ENCODE measurements at regions of chr5 and their contacts with region 1.

Region 1: DNA sequence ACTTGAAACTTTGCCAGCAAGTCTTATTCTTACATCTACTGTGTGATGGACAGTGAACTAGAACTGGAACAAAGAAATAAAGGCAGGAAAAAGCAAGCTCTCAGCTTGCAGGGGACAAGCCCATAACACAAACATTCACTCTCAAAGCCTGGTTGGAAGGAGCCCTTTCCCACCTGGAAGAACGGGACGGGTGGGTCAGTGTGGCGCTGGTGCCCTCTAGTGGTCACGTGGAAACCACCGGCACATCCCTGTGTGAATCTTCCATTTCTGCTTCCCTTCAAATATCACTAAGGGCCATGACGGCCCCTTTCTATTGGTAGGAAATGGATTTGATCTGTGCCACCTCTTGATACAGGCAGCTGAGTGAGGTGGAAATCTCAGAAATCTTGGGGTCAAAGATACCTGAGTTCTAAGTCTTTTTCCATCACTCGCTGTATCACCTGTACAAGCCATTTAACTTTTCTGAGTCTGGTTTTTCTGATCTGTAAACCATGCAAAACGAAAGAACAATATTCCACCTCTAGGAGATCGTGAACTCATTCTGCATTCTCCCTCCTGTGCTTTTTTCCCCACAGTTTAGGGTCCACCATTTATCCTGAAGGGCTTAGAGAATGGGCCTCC is 211.6 kb downstream of the MSX2 start:
- DNase-seq: peak; percentile 45
- ATAC-seq: peak; percentile 61 to 72

Region 2: GRCh38 chr5:174910245-174910737 is 25.7 kb before region 1 on chr5:
- intact Hi-C with region 1: loop called in 1 of 2 experiments (anchors 1 kb)
- DNase-seq: peak; percentile 66
- ATAC-seq: peak; percentile 92 to 97